ENCODE measurements at regions of chr5 and their contacts with region 1.

Region 1: DNA sequence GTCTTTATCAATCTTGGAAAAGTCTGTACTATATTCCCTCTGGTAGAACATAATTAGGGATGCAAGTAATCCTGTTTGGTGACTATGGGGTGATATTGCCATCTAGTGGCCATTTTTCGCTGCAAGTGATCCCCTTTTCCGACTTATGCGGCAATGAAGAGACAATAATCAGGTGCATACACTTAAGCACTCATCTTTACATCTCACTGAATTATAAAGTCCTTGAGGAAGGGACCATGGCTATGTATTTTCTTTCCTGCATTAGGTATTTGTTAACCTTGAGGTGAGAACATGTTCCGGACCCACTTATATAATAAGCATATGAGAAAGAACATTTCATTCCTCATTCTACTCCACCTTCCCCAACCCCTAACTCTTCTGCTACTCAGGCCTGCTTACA is 19.6 kb upstream of the LIX1 start:
- DNase-seq: peak; percentile 44 to 85
- ATAC-seq: peak; percentile 86 to 93
- H3K4me3 ChIP-seq: no peak overlapping the region
- H3K27ac ChIP-seq: no peak overlapping the region
- H3K4me1 ChIP-seq: peaks cover 9% of the 10 kb centered on the region
- CTCF ChIP-seq: peak; percentile 96
- EP300 ChIP-seq: no peak
- POLR2A ChIP-seq: no peak
- RAD21 ChIP-seq: peak; percentile 85 to 87

Region 2: DNA sequence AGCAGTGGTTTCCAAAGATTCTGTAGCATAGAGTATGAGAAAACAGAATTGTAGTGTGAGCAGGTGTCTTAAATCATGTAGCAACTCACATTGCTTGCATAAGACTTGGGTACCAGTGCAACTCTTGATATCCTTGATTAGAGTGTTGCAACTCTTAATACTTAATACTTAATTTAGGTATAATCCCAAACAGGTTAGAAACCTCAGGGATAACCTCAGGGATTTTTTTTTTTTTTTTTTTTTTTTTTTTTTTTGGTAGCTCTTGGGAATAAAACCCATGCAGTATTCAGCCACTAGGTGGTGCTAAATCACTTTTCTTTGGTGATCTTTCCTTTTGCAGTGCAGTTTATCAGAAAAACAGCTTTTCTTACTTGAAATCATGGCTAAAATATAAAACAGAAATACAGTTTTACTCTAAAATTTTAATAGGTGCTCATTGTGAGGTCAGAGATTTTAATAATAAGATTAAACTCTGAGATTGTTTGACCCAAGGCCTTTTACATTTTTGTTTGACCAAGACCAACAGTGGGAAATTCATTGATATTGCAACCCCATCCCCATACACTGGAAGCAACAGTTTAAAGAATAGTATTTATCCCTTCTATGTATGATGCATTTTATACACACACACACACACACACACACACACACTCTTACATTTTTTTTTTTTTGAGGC is 409.6 kb before region 1 on chr5:
- CTCF ChIA-PET with region 1: interaction called, 31 read pairs
- POLR2A ChIA-PET with region 1: no interaction called
- DNase-seq: peak; percentile 27 to 63
- ATAC-seq: peak in 1 of 2 experiments; percentile 60; a peak in 3 of 6 replicates
- H3K4me3 ChIP-seq: no peak overlapping the region
- H3K27ac ChIP-seq: no peak overlapping the region
- H3K4me1 ChIP-seq: no peaks in the 10 kb centered on the region
- CTCF ChIP-seq: peak; percentile 77
- EP300 ChIP-seq: no peak
- POLR2A ChIP-seq: no peak
- RAD21 ChIP-seq: peak; percentile 62 to 66

Region 3: GRCh38 chr5:96868603-96869371 is 293.3 kb before region 1 on chr5:
- CTCF ChIA-PET with region 1: interaction called, 30 read pairs
- POLR2A ChIA-PET with region 1: no interaction called
- DNase-seq: peak; percentile 54 to 76
- ATAC-seq: peak; percentile 95 to 98
- H3K4me3 ChIP-seq: no peak overlapping the region
- H3K27ac ChIP-seq: no peak overlapping the region
- H3K4me1 ChIP-seq: no peaks in the 10 kb centered on the region
- CTCF ChIP-seq: peak; percentile 87
- EP300 ChIP-seq: no peak
- POLR2A ChIP-seq: no peak
- RAD21 ChIP-seq: peak; percentile 84 to 92

Region 4: DNA sequence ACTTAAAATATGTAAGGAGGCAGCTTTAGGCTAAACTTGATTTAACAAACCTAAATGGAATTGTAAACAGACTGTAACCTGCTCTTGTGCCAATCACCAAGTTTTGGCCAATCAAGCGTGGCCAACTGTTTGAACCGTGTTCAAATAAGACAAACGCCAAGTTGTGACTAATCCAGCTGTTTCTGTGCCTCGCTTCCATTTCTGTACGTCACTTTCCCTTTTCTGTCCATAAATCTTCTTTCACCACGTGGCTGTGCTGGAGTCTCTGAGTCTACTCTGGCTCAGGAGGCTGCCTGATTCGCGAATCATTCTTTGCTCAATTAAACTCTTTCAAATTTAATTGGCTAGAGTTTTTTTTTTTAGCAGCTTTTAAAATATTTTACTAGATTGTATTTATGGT is 90.9 kb before region 1 on chr5:
- CTCF ChIA-PET with region 1: no interaction called
- POLR2A ChIA-PET with region 1: no interaction called
- DNase-seq: no peak
- ATAC-seq: no peak
- H3K4me3 ChIP-seq: no peak overlapping the region
- H3K27ac ChIP-seq: no peak overlapping the region
- H3K4me1 ChIP-seq: no peaks in the 10 kb centered on the region
- CTCF ChIP-seq: no peak
- EP300 ChIP-seq: no peak
- POLR2A ChIP-seq: no peak
- RAD21 ChIP-seq: no peak

Region 5: DNA sequence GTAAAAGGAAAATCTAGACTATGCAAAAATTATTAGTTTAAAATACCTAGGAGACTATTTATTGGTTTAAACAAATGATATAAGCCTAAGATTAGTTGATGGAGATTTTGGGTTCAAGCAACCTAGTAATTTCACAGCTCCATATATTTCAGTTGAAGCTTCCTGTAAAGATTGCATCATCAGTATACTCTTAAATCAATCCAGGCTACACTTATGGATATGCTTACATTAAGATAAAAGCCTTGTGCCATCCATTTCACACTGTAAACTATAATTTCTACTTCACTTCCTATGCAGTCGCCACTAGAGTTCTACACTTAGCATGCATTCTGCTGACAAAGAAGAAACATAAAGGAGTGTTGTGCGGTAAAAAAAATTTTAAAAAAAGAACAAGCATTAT is 12.3 kb before region 1 on chr5:
- CTCF ChIA-PET with region 1: interaction called, 15 read pairs
- POLR2A ChIA-PET with region 1: no interaction called
- DNase-seq: no peak
- ATAC-seq: no peak
- H3K4me3 ChIP-seq: no peak overlapping the region
- H3K27ac ChIP-seq: no peak overlapping the region
- H3K4me1 ChIP-seq: no peaks in the 10 kb centered on the region
- CTCF ChIP-seq: no peak
- EP300 ChIP-seq: no peak
- POLR2A ChIP-seq: no peak
- RAD21 ChIP-seq: no peak

Region 6: DNA sequence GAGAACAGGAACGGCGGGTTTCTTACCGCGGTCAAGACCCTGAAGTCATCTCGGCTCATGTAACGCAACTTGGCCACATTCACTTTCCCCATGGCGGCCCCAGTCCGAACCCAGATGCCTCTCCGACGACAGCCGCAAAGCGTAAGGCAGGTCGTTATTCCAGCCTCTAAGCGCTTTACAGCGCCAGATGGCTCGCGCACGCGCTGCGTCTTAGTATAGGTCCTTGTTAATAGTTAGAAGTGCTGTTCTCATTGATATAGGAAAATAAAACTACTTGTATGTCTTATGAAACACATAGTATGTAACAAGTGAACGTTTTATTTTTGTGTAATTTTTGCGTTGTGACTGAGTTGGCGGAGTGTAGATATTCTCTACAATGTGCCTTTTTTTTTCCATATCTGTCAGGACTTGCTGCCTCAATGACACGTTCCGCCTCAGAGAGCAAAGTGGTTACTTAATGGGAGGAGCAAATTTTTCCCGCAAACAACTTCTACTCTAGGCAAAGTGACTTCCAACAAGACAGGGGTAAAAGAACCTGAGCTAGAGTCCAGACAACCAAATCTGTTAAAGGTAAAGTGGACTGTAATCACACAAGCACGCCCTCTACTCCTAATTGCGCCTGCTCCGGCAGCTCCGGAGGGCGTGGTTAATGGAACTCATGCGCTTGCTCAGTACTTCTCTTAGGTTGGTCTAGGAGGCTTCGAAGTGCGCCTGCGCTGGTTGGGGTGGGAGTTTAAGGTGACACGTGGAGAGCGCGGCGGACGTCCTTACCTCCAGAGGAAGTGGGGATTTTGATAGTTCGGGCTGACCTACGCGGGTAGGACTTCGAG is 21.3 kb after region 1 on chr5 and contains the start of gene RIOK2:
- CTCF ChIA-PET with region 1: interaction called, 12 read pairs
- POLR2A ChIA-PET with region 1: no interaction called
- DNase-seq: peak; percentile 89 to 97
- ATAC-seq: peak; percentile 93 to 96
- H3K4me3 ChIP-seq: peak within 1 kb of the TSS; percentile 70
- H3K27ac ChIP-seq: peak within 1 kb of the TSS; percentile 88 to 92
- H3K4me1 ChIP-seq: peaks cover 9% of the 10 kb centered on the region; the same call in 1 of the 3 replicates
- CTCF ChIP-seq: no peak
- EP300 ChIP-seq: no peak
- POLR2A ChIP-seq: peak; percentile 85
- RAD21 ChIP-seq: no peak
- polyA plus RNA-seq, gene RIOK2: 25.4 and 32.0 TPM in 2 replicates

Region 7: DNA sequence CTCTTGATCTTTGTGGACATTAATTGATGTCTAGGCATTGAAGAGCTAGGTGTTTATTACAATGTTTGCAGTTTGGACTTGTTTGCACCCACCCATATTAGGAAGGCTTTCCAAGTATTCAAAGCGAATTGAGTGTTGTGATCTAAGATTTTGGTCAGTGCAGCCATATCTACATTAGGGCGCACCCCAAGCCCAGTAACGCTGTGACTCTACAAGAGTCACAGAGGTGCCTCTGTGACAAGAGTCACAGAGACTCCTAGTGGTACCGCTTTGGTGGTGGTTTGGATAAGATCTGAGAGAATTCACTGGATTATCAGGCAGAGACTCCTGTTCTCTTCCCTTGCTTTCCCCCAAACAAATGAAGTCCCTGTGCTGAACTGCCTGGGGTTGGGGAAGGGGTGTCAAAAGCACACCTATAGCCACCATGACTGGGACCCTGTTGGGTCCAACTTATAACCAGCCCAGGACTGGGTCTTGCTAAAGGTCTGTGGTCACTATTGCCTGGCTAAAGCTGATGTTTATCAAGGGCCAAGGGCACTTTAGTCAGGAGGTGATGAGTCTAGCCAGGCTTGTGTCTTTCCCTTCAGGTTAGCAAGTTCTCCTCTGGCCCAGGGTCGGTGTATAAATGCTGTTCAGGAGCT is 135.1 kb after region 1 on chr5:
- CTCF ChIA-PET with region 1: no interaction called
- POLR2A ChIA-PET with region 1: no interaction called
- DNase-seq: peak in 1 of 2 experiments; percentile 31
- ATAC-seq: peak; percentile 54 to 82; a peak in 4 of 6 replicates
- H3K4me3 ChIP-seq: no peak overlapping the region
- H3K27ac ChIP-seq: no peak overlapping the region
- H3K4me1 ChIP-seq: no peaks in the 10 kb centered on the region
- CTCF ChIP-seq: peak; percentile 15; the same call in 1 of the 3 replicates
- EP300 ChIP-seq: no peak
- POLR2A ChIP-seq: no peak
- RAD21 ChIP-seq: peak; percentile 15 to 35; a peak in 2 of 5 replicates

Region 8: DNA sequence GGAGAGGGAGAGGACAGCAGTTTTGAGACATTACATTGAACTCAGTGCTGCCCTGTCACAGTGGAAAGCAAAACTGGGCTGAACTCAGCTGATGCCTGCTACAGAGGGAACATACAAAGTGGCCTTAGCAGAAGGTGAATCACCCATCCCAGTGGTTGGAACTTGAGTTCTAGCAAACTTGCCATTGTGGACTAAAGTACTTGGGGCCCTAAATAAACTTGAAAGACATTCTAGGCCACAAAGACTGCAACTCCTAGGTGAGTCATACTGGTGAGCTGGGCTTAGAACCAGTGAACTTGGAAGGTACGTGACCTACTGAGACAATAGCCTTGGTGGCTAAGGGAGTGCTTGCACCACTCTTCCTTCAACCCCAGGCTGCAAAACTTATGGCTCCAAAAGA is 176.7 kb after region 1 on chr5:
- CTCF ChIA-PET with region 1: no interaction called
- POLR2A ChIA-PET with region 1: no interaction called
- DNase-seq: no peak
- ATAC-seq: no peak
- H3K4me3 ChIP-seq: no peak overlapping the region
- H3K27ac ChIP-seq: no peak overlapping the region
- H3K4me1 ChIP-seq: no peaks in the 10 kb centered on the region
- CTCF ChIP-seq: no peak
- EP300 ChIP-seq: no peak
- POLR2A ChIP-seq: no peak
- RAD21 ChIP-seq: no peak

Region 9: GRCh38 chr5:97559827-97560598 is 398.0 kb after region 1 on chr5:
- CTCF ChIA-PET with region 1: no interaction called
- POLR2A ChIA-PET with region 1: no interaction called
- DNase-seq: no peak
- ATAC-seq: no peak
- H3K4me3 ChIP-seq: no peak overlapping the region
- H3K27ac ChIP-seq: no peak overlapping the region
- H3K4me1 ChIP-seq: no peaks in the 10 kb centered on the region
- CTCF ChIP-seq: no peak
- EP300 ChIP-seq: no peak
- POLR2A ChIP-seq: no peak
- RAD21 ChIP-seq: no peak

Measured in A549 (cell line).